Calu3 (cell line): ENCODE measurements at regions of chr20 and their contacts with region 1.

Region 1: DNA sequence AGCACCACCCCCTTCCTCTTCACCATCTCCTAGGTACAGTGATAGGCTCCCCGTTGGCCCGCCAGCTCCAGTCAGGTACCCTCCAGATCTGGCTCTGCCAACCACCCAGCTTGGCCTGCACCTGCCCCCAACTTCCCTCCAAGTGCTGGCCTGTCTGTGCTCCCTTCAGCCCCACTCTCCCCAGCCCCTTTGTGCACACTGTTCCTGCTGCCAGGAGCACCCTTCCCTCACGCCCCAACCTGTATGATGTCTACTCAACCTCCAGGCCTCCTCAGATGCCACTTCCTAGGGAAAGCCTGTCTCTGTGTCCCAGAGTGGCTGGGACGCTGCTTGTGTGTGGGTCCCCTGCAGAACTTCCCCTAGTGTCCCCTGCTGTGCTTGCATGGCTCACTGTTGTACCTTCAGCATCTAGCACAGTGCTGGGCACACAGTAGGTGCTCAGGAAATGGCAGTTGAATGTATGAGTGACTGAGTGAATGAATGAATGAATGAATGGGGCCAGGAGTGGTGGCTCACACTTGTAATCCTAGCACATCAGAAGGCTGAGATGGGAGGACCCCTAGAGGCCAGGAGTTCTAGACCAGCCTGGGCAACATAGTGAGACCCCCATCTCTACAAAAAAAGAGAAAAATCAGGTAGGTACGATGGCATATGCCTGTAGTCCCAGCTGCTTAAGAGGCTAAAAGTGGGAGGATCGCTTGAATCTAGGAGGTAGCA is 3.0 kb downstream of the ZBP1 start:
- DNase-seq: no peak
- H3K4me3 Mint-ChIP-seq: peak overlapping the region; percentile 25
- H3K27ac Mint-ChIP-seq: no peak overlapping the region
- H3K4me1 Mint-ChIP-seq: peaks cover 44% of the 10 kb centered on the region
- H3K27me3 Mint-ChIP-seq: no peaks in the 10 kb centered on the region
- CTCF ChIP-seq: no peak

Region 2: DNA sequence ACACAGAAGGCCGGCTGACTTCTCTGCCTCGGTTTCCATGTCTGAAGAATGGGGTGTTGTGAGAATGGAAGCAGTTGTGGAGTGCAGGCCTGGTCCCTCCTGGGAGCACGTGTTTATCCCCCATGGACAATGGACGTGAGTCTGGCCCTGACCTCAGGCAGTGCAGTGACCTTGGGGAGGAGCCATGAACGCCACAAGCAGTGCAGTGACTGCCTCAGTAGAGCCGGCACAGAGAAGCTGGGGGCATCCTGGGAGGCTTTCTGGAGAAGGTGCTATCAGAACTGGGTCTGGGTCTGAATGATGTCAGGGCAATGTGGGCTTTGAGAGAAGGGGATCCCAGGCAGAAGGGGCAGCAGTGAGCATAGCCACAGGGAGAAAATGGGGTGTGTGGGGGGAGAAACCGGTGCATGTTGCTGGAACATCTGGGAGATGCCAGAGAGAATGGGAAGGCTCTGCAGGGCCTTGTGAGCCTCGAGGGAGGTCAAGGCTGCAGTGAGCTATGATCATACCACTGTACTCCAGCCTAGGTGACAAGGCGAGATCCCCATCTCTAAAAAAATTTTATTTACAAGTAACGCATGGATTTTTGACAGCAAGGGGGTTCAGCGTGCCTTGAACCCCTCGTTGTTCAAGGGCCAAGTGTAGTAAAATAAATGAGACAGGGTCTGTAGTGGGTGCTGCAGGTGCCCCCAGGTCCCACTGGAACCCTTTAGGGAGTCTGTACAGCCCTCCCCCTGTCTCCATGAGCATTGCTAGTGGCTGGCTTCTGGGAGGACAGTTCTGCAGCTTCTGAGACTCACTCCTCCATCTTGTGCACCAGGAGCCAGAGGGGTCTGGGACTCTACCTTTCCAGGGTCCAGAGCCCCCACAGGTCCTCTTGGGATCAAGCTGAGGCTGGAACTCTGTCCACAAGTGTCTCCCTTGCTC is 30.0 kb after region 1 on chr20:
- CTCF ChIA-PET with region 1: interaction called, 9 read pairs
- intact Hi-C with region 1: loop called (anchors 1 kb)
- DNase-seq: peak; percentile 36
- H3K4me3 Mint-ChIP-seq: peak overlapping the region; percentile 28
- H3K27ac Mint-ChIP-seq: peak overlapping the region; percentile 95
- H3K4me1 Mint-ChIP-seq: peaks cover 21% of the 10 kb centered on the region
- H3K27me3 Mint-ChIP-seq: no peaks in the 10 kb centered on the region
- CTCF ChIP-seq: peak; percentile 8

Region 3: DNA sequence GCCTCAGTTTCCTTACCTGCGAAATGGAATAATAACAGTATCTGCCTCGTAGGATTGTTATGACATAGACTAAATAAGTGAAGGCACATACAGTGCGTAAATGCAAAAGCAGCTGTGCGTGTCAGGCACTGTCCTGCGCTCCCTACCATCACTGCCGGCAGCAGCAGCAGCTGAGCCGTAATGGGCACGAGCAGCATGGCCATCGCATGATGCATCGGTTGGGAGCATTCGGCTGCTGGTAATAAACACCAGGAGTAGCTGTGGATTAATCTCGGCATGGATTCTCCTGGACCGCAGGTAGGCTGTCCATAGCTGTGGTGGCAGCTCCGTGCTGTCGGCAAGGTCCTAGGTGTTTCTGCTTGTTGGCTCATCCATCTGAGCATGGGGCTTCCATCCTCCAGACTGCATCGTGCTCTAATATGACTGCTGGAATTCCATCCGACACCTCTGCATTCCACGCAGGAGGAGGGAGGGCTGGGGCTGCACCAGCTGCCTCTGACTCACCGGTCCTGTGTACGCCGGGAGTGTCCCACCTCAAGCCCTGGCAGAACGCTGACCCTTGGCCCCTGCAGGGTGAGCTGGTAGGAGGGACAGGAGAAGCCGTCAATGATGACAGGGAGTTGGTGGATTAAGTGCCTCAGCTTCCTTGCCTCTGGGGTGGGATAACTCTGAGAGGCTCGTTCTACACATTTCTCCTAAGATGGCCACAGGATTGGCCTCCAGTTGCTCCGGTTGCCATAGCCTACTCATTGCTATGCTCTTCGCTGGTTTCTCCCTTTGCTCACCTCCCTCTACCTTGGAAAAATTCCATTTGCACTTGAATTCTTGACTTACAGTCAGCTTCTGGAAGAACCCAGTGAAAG is 193.5 kb after region 1 on chr20:
- CTCF ChIA-PET with region 1: no interaction called
- intact Hi-C with region 1: no loop called
- DNase-seq: peak; percentile 85
- H3K4me3 Mint-ChIP-seq: no peak overlapping the region
- H3K27ac Mint-ChIP-seq: peak overlapping the region; percentile 31
- H3K4me1 Mint-ChIP-seq: peaks cover 24% of the 10 kb centered on the region
- H3K27me3 Mint-ChIP-seq: peaks cover 15% of the 10 kb centered on the region
- CTCF ChIP-seq: no peak